Heart right ventricle (tissue), 16 donors: ENCODE measurements at regions of chrX and their contacts with region 1.

Region 1: GRCh38 chrX:46573331-46573891 is at the start of gene CHST7:
- DNase-seq: peak; percentile 55 to 79
- ATAC-seq: peak; percentile 68 to 89 (median 84)
- H3K4me3 ChIP-seq: peak within 1 kb of the TSS; percentile 53 to 78 (median 70)
- H3K27ac ChIP-seq: peak within 1 kb of the TSS; percentile 47 to 84 (median 76)
- H3K4me1 ChIP-seq: peaks cover 0 to 32% (median 17%) of the 10 kb centered on the region in 9 donors
- H3K27me3 ChIP-seq: no peaks in the 10 kb centered on the region
- CTCF ChIP-seq: peak in 6 of 9 donors; percentile 20 to 55 (median 36)
- total RNA-seq, gene CHST7: 3.5 to 23.0 (median 8.6) TPM

Region 2: DNA sequence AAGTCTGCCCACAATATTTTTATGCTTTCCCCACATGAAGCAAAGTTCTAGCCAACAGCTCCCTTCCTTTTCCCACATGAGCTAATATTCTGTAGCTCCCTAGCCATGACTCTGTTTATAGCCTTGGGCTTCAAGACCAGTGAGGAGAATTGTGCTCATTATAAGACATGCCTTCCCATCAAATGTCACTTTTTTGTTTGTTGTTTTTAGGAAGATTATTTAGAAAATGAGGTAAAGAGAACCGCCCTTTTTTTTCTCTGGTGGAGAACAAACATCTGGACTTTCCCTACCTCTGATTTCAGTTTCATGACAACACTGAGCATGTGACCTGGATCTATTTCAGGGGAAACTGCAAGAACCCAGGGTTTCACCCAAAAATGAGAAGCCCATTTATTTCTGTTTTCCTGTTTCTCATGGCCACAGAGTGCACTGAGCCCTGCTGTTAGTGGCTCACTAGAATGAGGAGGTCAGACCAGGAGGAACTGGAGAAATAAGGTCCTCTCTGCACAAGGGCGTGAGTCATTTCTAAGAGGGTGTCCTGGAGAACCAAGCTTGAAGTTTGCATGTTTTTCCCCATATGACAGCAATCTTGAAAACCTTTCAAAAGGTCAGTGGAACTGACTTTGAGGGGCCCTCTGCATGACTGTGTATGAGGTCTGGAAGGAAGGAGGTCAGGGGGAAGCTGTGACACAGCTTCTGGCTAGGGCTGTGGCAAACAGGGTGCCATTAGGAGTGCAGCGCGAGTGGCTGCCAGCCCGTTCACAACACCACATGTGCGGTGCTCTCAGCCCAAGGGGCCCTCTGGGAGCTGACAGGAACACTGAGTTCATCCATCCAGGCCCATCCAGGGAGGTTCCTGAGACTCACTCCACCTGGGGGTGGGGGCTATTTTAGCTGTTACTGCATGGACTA is 55.3 kb after region 1 on chrX:
- intact Hi-C with region 1: loop called in 2 of 10 experiments (anchors 5 kb)
- DNase-seq: peak; percentile 25 to 48
- ATAC-seq: peak; percentile 63 to 84 (median 76)
- H3K4me3 ChIP-seq: no peak overlapping the region
- H3K27ac ChIP-seq: peak overlapping the region; percentile 37 to 83 (median 62)
- H3K4me1 ChIP-seq: peaks cover 3 to 51% (median 28%) of the 10 kb centered on the region in 9 donors
- H3K27me3 ChIP-seq: peaks cover 0 to 15% (median 0%) of the 10 kb centered on the region in 7 donors
- CTCF ChIP-seq: no peak

Region 3: DNA sequence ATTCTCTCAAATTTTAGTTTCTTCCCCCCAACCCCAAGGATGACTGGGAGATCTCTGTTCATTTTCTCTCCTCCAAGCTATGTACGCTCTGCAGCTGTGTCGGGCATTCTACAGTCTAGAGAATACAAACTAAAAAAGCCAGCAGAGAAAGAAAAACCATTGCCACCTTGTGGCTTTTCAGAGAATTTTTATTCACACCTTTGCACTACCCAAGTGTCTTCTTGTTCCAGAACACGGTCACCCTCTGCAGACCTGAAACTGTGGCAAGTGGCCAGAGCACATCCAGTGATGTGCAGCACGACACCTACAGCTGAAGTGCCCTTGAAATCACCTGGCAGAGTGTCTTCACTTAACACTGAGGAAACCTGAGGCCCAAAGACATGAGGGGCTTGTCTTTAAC is 68.7 kb after region 1 on chrX:
- intact Hi-C with region 1: loop called in 9 of 10 experiments (anchors 1 to 10 kb)
- DNase-seq: peak in 1 of 2 donors; percentile 7
- ATAC-seq: peak; percentile 67 to 89 (median 81)
- H3K4me3 ChIP-seq: no peak overlapping the region
- H3K27ac ChIP-seq: no peak overlapping the region
- H3K4me1 ChIP-seq: peaks cover 0 to 8% (median 0%) of the 10 kb centered on the region in 9 donors
- H3K27me3 ChIP-seq: peaks cover 0 to 14% (median 0%) of the 10 kb centered on the region in 7 donors
- CTCF ChIP-seq: peak; percentile 21 to 65 (median 50)

Region 4: GRCh38 chrX:46653482-46653881 is 80.1 kb after region 1 on chrX:
- intact Hi-C with region 1: loop called in 3 of 10 experiments (anchors 5 to 10 kb)
- DNase-seq: no peak
- ATAC-seq: no peak
- H3K4me3 ChIP-seq: no peak overlapping the region
- H3K27ac ChIP-seq: no peak overlapping the region
- H3K4me1 ChIP-seq: peaks cover 0 to 22% (median 16%) of the 10 kb centered on the region in 9 donors
- H3K27me3 ChIP-seq: peaks cover 0 to 11% (median 0%) of the 10 kb centered on the region in 7 donors
- CTCF ChIP-seq: peak in 2 of 9 donors; percentile 13 to 25

Region 5: DNA sequence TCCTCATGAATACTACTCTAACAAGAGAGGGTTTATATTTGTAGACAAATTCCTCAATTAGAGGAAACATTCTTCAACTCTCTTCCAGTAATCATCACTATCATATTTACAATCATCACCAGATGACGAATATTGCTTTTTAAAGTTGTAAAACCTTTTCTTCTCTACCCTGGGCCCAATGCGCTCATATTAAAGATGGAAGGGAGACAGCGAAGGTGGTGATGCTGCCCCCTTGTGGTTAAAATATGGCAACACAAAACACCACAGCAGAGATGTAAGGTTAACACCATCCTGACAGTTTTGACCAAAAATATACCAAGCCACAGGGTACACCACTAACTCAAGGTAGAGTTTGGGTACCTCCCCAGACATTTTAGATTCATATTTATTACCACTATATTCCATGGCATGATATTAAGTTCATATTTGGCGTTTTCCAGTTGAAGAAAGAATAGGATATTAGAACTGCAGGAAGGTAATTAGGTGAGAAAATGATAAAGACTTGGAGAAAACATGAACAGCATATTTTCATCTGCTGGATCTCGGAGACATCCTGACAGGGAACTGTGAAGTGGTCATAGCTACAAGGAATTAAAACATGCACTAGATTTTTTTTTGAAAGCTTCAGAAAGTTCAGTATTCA is 112.7 kb after region 1 on chrX:
- intact Hi-C with region 1: loop called in 3 of 10 experiments (anchors 5 to 10 kb)
- DNase-seq: peak in 1 of 2 donors; percentile 17
- ATAC-seq: peak in 4 of 8 donors; percentile 52 to 63 (median 58)
- H3K4me3 ChIP-seq: no peak overlapping the region
- H3K27ac ChIP-seq: no peak overlapping the region
- H3K4me1 ChIP-seq: peaks cover 0 to 4% (median 0%) of the 10 kb centered on the region in 9 donors
- H3K27me3 ChIP-seq: peaks cover 0 to 6% (median 0%) of the 10 kb centered on the region in 7 donors
- CTCF ChIP-seq: peak; percentile 49 to 79 (median 68)

Region 6: GRCh38 chrX:46727441-46727840 is 154.0 kb after region 1 on chrX:
- intact Hi-C with region 1: no loop called
- DNase-seq: no peak
- ATAC-seq: no peak
- H3K4me3 ChIP-seq: no peak overlapping the region
- H3K27ac ChIP-seq: no peak overlapping the region
- H3K4me1 ChIP-seq: no peaks in the 10 kb centered on the region
- H3K27me3 ChIP-seq: peaks cover 0 to 29% (median 0%) of the 10 kb centered on the region in 7 donors
- CTCF ChIP-seq: no peak